ENCODE measurements at regions of chr10 and their contacts with region 1.

Region 1: DNA sequence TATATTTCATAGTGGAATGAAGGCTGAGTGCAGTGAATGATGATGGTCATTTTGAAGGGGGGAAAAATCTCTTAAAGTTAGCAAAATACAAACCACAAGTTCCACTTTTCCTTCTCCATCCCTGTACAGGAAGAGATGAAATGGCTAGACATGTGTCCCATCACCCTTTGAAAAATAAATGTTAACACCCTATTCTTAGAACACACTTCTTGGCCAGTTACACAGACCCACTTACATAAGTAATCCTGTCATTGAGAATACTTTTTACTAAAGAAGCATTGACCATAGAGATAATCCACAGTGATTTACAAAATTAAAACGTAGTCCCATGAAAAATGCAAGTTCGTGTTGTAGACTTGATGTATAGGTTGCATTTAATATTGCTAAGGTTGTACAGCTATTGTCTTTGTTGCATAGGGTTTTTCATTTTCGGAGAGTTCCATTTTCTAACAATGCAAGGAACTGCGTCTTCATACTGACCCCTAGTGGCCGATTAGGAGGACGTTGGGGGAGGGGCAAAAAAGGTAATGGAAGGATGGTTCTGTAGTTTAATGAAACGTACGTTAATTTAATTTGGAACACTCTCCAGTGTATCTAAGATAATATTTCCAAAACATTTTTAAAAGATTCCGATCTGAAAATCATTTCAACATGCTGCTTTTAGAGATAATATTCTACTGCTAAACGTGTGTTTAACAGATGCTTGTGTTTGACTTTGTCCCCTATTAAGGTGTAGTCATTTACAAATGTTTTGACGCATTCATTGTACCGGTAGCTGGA is 60.9 kb downstream of the ARMC3 start:
- DNase-seq: peak; percentile 46 to 85 (median 74)
- ATAC-seq: peak; percentile 80
- H3K4me3 ChIP-seq: no peak overlapping the region
- H3K4me3 Mint-ChIP-seq: no peak overlapping the region
- H3K27ac ChIP-seq: no peak overlapping the region
- H3K27ac Mint-ChIP-seq: no peak overlapping the region
- H3K4me1 ChIP-seq: peaks cover 4% of the 10 kb centered on the region
- H3K4me1 Mint-ChIP-seq: peaks cover 14% of the 10 kb centered on the region
- H3K27me3 ChIP-seq: no peaks in the 10 kb centered on the region
- H3K27me3 Mint-ChIP-seq: peaks cover 2% of the 10 kb centered on the region
- CTCF ChIP-seq: peak; percentile 88

Region 2: DNA sequence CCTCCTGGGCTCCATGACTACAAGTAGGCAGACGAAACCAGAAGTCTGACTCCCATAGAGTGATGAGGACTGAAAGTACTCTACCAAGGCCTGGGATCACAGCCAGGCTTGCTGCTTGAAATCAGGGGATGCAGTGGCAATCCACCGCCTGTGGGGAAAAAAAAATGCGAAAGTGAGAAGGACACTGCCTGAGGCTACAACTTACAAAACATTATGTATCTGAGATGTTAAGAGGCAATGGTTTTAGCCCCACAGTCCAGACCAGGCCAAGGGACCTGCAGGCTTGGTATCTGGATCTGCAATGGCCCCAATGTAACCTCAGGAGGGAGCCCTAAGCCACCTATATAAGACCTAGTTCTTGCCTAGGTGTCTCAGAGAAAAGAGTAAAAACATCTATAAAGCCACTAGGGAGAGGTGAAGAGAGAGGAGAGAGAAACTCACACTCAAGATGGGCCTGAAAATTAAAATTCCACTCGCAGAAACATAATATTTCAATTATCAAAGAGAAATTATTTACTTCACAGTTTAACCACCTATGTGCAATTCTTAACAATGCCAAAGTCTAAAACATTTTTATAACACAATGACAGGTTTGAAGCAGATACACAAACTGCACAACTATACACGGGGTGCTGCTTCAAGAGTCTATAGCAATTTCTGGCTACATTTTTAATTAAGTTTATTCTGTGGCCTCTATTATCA is 999.2 kb before region 1 on chr10:
- CTCF ChIA-PET with region 1: interaction called, 65 read pairs
- POLR2A ChIA-PET with region 1: no interaction called
- intact Hi-C with region 1: loop called (anchors 1 kb)
- DNase-seq: peak in 6 of 9 experiments; percentile 3 to 64 (median 22)
- ATAC-seq: peak; percentile 89
- H3K4me3 ChIP-seq: no peak overlapping the region
- H3K4me3 Mint-ChIP-seq: no peak overlapping the region
- H3K27ac ChIP-seq: no peak overlapping the region
- H3K27ac Mint-ChIP-seq: no peak overlapping the region
- H3K4me1 ChIP-seq: no peaks in the 10 kb centered on the region
- H3K4me1 Mint-ChIP-seq: peaks cover 10% of the 10 kb centered on the region
- H3K27me3 ChIP-seq: no peaks in the 10 kb centered on the region
- H3K27me3 Mint-ChIP-seq: no peaks in the 10 kb centered on the region
- CTCF ChIP-seq: peak; percentile 53

Region 3: GRCh38 chr10:22228943-22229801 is 759.6 kb before region 1 on chr10:
- CTCF ChIA-PET with region 1: interaction called, 3 read pairs
- POLR2A ChIA-PET with region 1: interaction called, 7 read pairs
- intact Hi-C with region 1: loop called in 1 of 2 experiments (anchors 2 kb)
- DNase-seq: peak; percentile 66 to 92 (median 86)
- ATAC-seq: peak; percentile 76
- H3K4me3 ChIP-seq: peak overlapping the region; percentile 67 to 77
- H3K4me3 Mint-ChIP-seq: peak overlapping the region; percentile 82
- H3K27ac ChIP-seq: peak overlapping the region; percentile 60 to 63
- H3K27ac Mint-ChIP-seq: peak overlapping the region; percentile 98
- H3K4me1 ChIP-seq: peaks cover 8% of the 10 kb centered on the region
- H3K4me1 Mint-ChIP-seq: peaks cover 14% of the 10 kb centered on the region
- H3K27me3 ChIP-seq: peaks cover 0 to 3% of the 10 kb centered on the region in 2 experiments
- H3K27me3 Mint-ChIP-seq: no peaks in the 10 kb centered on the region
- CTCF ChIP-seq: no peak

Region 4: GRCh38 chr10:22259280-22259679 is 729.5 kb before region 1 on chr10:
- CTCF ChIA-PET with region 1: interaction called, 10 read pairs
- POLR2A ChIA-PET with region 1: no interaction called
- intact Hi-C with region 1: loop called (anchors 1 to 10 kb)
- DNase-seq: peak in 3 of 9 experiments; percentile 21 to 48 (median 33)
- ATAC-seq: peak; percentile 58
- H3K4me3 ChIP-seq: no peak overlapping the region
- H3K4me3 Mint-ChIP-seq: no peak overlapping the region
- H3K27ac ChIP-seq: no peak overlapping the region
- H3K27ac Mint-ChIP-seq: no peak overlapping the region
- H3K4me1 ChIP-seq: no peaks in the 10 kb centered on the region
- H3K4me1 Mint-ChIP-seq: peaks cover 7% of the 10 kb centered on the region
- H3K27me3 ChIP-seq: peaks cover 0 to 3% of the 10 kb centered on the region in 2 experiments
- H3K27me3 Mint-ChIP-seq: peaks cover 36% of the 10 kb centered on the region
- CTCF ChIP-seq: no peak

Region 5: GRCh38 chr10:22550732-22551131 is 438.0 kb before region 1 on chr10:
- CTCF ChIA-PET with region 1: interaction called, 26 read pairs
- POLR2A ChIA-PET with region 1: no interaction called
- intact Hi-C with region 1: loop called (anchors 1 kb)
- DNase-seq: peak; percentile 37 to 83 (median 75)
- ATAC-seq: peak; percentile 79
- H3K4me3 ChIP-seq: no peak overlapping the region
- H3K4me3 Mint-ChIP-seq: no peak overlapping the region
- H3K27ac ChIP-seq: no peak overlapping the region
- H3K27ac Mint-ChIP-seq: peak overlapping the region; percentile 67
- H3K4me1 ChIP-seq: no peaks in the 10 kb centered on the region
- H3K4me1 Mint-ChIP-seq: peaks cover 30% of the 10 kb centered on the region
- H3K27me3 ChIP-seq: no peaks in the 10 kb centered on the region
- H3K27me3 Mint-ChIP-seq: no peaks in the 10 kb centered on the region
- CTCF ChIP-seq: peak; percentile 81

Region 6: DNA sequence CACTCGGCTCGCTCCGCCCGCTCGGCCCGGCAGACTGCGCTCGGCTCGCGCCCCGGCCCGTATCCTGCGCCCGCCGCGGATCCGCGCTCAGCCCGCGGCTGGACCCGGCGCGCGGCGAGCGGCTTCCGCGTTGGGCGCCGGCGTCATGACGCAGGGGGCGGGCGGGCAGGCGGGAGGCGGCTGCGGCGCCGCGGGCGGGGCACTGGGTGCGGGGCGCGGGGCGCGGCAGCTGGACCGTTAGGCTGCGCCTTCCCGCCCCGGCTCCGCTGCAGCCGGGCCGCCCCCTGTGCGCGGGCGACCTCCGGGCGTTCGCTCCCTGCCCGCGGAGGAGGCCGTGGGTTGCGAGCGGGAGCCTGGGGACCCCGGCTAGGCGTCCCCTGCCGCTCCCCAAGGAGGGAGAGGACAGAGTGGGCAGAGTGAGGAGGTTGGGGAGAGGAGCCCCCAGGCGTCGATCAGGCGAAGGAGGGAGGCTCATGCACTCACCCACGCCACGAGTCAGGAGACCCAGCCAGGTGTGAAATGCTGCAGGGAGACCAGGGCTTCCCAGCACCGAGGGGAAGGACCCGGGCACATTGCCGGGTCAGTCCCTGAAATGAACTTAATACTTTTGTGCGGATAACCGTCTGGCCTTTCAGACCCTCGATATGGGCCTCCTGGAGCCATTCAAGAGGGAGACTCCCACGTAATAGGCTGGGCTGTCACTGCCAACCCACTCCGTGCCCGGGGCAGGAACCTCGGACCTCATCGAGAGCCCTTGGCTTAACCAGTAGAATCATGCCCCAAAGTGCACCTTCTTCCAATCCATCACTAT is 274.1 kb before region 1 on chr10 and contains the start of gene PIP4K2A:
- CTCF ChIA-PET with region 1: interaction called, 4 read pairs
- POLR2A ChIA-PET with region 1: no interaction called
- intact Hi-C with region 1: loop called in 1 of 2 experiments (anchors 5 kb)
- DNase-seq: peak; percentile 43 to 92 (median 75)
- ATAC-seq: peak; percentile 76
- H3K4me3 ChIP-seq: peak within 1 kb of the TSS; percentile 72 to 95
- H3K4me3 Mint-ChIP-seq: peak within 1 kb of the TSS; percentile 94
- H3K27ac ChIP-seq: peak within 1 kb of the TSS; percentile 78 to 81
- H3K27ac Mint-ChIP-seq: peak within 1 kb of the TSS; percentile 92
- H3K4me1 ChIP-seq: peaks cover 25% of the 10 kb centered on the region
- H3K4me1 Mint-ChIP-seq: peaks cover 30% of the 10 kb centered on the region
- H3K27me3 ChIP-seq: no peaks in the 10 kb centered on the region
- H3K27me3 Mint-ChIP-seq: no peaks in the 10 kb centered on the region
- CTCF ChIP-seq: no peak
- total RNA-seq, gene PIP4K2A: 82.5 to 89.5 TPM